H1 (cell line): ENCODE measurements at regions of chr9 and their contacts with region 1.

Region 1: GRCh38 chr9:2241836-2242741 is 226.9 kb downstream of the SMARCA2 start:
- DNase-seq: peak; percentile 77 to 98
- H3K4me3 ChIP-seq: peak overlapping the region; percentile 37 to 56 (median 46); a peak in 7 of 8 replicates
- H3K27ac ChIP-seq: peak overlapping the region; percentile 82
- H3K4me1 ChIP-seq: peaks cover 8 to 17% (median 12%) of the 10 kb centered on the region in 4 experiments
- H3K27me3 ChIP-seq: no peaks in the 10 kb centered on the region
- CTCF ChIP-seq: no peak
- EP300 ChIP-seq: peak in 1 of 2 experiments; percentile 84; a peak in 1 of 3 replicates
- POLR2A ChIP-seq: peak; percentile 74
- RAD21 ChIP-seq: peak; percentile 8 to 17; a peak in 2 of 4 replicates

Region 2: GRCh38 chr9:2228132-2228531 is 14.0 kb before region 1 on chr9:
- CTCF ChIA-PET with region 1: interaction called, 48 read pairs
- POLR2A ChIA-PET with region 1: interaction called, 7 read pairs
- DNase-seq: peak; percentile 44 to 85
- H3K4me3 ChIP-seq: no peak overlapping the region
- H3K27ac ChIP-seq: no peak overlapping the region
- H3K4me1 ChIP-seq: no peaks in the 10 kb centered on the region
- H3K27me3 ChIP-seq: no peaks in the 10 kb centered on the region
- CTCF ChIP-seq: peak; percentile 60 to 77 (median 60)
- EP300 ChIP-seq: no peak
- POLR2A ChIP-seq: no peak
- RAD21 ChIP-seq: peak; percentile 90 to 91

Region 3: DNA sequence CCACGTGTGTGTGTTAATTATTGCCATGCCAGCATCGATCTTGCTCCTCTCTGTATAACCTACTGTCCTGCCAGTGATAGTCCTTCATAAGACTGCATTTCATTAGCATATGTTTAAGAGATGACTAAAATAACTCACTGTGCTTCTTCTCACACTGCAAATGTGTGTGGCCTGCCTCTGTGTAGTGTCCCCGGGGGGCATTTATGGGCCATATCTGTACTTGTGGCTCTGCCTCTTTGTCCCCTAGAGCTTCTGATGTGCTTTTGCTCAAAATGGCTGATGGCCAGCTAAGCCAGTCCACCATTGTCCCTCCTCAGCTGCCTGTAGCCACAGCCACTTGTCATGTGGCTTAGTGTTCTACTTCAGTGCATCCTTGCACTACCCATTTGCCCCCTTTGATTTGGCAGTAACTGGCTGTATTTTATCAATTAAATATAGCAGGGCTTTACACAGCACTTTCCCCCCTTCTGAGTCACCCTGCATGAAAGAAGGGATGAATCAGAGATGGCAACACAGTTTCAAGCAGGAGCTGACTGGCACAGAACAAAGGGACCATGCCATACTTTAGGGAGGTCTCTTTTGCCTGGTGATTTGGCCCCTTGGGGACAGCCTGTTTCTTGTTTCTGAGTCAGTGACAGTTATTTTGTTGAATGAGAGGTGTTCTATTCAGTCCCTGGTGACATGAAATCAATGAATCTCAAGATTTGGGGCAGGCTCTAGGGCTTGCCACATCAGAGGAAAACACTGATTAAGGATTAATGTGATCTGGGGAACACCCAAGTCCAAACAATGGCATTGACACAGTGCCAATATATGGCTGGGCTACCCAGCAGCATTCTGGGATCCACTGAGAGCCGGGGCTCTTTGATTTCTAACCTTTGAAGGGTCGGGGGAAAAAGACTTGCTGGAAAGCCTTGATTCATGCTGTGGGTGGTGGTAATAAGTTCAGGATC is 18.5 kb after region 1 on chr9:
- CTCF ChIA-PET with region 1: interaction called, 15 read pairs
- POLR2A ChIA-PET with region 1: interaction called, 6 read pairs
- DNase-seq: no peak
- H3K4me3 ChIP-seq: no peak overlapping the region
- H3K27ac ChIP-seq: no peak overlapping the region
- H3K4me1 ChIP-seq: peaks cover 0 to 2% (median 0%) of the 10 kb centered on the region in 4 experiments; a peak in 1 of 7 replicates
- H3K27me3 ChIP-seq: no peaks in the 10 kb centered on the region; a peak in 1 of 7 replicates
- CTCF ChIP-seq: no peak
- EP300 ChIP-seq: no peak
- POLR2A ChIP-seq: no peak
- RAD21 ChIP-seq: no peak

Region 4: GRCh38 chr9:2281031-2281802 is 39.1 kb after region 1 on chr9:
- CTCF ChIA-PET with region 1: interaction called, 3 read pairs
- POLR2A ChIA-PET with region 1: interaction called, 17 read pairs
- DNase-seq: peak; percentile 80 to 81
- H3K4me3 ChIP-seq: peak overlapping the region in 1 of 4 experiments; percentile 33; a peak in 1 of 8 replicates
- H3K27ac ChIP-seq: peak overlapping the region; percentile 78
- H3K4me1 ChIP-seq: peaks cover 6 to 24% (median 13%) of the 10 kb centered on the region in 4 experiments; a peak in 5 of 7 replicates
- H3K27me3 ChIP-seq: no peaks in the 10 kb centered on the region
- CTCF ChIP-seq: no peak
- EP300 ChIP-seq: peak in 1 of 2 experiments; percentile 64; a peak in 2 of 3 replicates
- POLR2A ChIP-seq: peak in 1 of 2 experiments; percentile 72; a peak in 2 of 3 replicates
- RAD21 ChIP-seq: no peak

Region 5: GRCh38 chr9:2307480-2307879 is 65.4 kb after region 1 on chr9:
- CTCF ChIA-PET with region 1: no interaction called
- POLR2A ChIA-PET with region 1: no interaction called
- DNase-seq: peak in 1 of 2 experiments; percentile 11
- H3K4me3 ChIP-seq: no peak overlapping the region
- H3K27ac ChIP-seq: no peak overlapping the region
- H3K4me1 ChIP-seq: no peaks in the 10 kb centered on the region
- H3K27me3 ChIP-seq: no peaks in the 10 kb centered on the region
- CTCF ChIP-seq: no peak
- EP300 ChIP-seq: no peak
- POLR2A ChIP-seq: no peak
- RAD21 ChIP-seq: no peak